Activated naive CD4-positive, alpha-beta T cell treated with anti-CD3 and anti-CD28 coated beads, Interleukin-2, amount 10 ng/mL, durations not matched to agents 7 days and 5 days (primary cell): ENCODE measurements at regions of chr9 and their contacts with region 1.

Region 1: DNA sequence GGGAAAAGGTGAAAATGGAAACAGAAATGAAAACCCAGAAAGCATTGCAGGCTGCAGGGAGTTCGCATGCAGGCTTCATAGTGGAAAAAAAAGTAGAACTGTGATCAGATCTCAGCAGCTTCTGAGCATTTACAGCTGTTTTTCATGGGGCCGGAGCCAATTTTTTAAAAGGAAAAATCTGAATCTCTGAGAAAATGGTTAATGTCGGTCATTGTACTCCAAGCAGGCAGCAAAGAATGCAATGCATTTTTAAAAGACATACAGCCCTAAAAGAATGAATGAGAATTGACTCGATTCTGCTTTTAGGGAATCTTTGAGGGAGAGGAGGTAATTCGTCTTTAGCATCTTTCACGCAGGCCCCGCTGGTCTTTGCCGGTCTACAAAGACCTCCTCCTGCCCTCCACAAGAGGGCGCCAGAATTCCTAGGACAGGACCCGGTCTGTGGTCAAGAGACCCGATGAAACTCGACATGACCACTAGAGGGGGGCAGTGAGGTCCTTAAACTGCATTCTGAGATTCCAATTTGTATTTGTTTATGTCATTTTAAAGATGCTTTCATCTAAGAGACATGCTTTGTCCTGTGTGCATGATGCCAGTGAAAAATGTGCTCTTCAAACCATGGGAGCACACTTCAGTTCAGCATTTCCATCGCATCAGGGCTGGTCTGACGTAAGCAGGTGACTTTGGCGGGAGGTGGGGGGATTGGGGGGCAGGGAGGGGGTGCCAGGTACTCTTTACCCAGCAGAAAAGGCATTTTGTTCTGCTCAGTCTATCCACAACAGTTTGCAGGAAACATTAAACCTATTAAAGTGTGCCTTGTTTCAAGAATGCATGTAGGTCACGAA is 43.7 kb upstream of the TMEM252 start:
- DNase-seq: peak; percentile 89
- H3K4me3 Mint-ChIP-seq: no peak overlapping the region
- H3K27ac Mint-ChIP-seq: no peak overlapping the region
- H3K4me1 Mint-ChIP-seq: peaks cover 3% of the 10 kb centered on the region
- H3K27me3 Mint-ChIP-seq: peaks cover 14% of the 10 kb centered on the region

Region 2: DNA sequence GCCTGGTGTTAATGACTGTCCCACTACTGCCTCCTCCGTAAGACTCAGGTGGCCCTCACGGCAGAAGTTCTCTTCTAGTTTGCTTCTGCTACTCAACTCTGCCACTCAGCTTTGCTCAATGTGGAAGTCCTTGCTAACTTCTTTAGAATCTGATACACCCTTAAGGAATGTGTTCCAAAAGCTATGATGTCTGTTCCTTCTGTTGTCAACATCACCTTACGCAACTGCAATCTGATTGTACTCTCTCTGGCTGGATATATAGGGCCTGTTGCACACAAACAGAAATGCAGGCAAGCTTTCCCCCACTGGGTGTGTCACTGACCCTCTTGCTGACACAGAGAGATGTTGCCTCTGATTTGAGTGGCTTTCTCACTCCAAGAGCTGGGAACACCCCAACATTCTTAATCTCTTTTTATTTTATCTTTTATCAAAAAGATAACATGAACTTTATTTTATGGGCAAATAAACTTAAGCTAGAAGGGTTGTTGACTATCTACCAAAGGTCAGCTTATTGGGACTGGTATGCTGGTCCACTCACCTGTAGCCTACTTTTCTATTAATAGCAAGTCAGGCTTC is 69.0 kb before region 1 on chr9:
- CTCF ChIA-PET with region 1: no interaction called
- DNase-seq: no peak
- H3K4me3 Mint-ChIP-seq: no peak overlapping the region
- H3K27ac Mint-ChIP-seq: no peak overlapping the region
- H3K4me1 Mint-ChIP-seq: no peaks in the 10 kb centered on the region
- H3K27me3 Mint-ChIP-seq: peaks cover 4% of the 10 kb centered on the region

Region 3: DNA sequence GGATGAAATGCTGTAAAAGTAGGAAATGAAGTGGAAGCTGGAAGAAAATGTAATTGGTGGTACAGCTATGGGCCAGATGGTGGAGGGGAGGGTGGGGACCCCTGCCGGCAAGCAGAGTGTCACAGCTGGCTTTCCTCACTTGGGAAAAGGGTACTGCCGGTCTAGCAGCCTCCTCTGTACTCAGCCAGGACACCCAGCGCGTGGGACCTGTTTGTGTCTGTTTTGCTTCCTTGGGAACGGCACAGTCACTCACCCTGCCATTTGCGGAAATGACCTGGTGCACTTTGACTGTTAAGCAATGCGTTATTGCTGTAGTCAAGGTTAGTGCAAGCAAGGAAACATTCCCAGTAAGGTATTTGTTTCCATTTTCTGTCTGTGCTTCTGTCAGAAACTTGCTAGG is 53.8 kb before region 1 on chr9:
- CTCF ChIA-PET with region 1: no interaction called
- DNase-seq: no peak
- H3K4me3 Mint-ChIP-seq: no peak overlapping the region
- H3K27ac Mint-ChIP-seq: no peak overlapping the region
- H3K4me1 Mint-ChIP-seq: no peaks in the 10 kb centered on the region
- H3K27me3 Mint-ChIP-seq: peaks cover 3% of the 10 kb centered on the region

Region 4: GRCh38 chr9:68546596-68547390 is 37.6 kb before region 1 on chr9:
- CTCF ChIA-PET with region 1: no interaction called
- DNase-seq: no peak
- H3K4me3 Mint-ChIP-seq: no peak overlapping the region
- H3K27ac Mint-ChIP-seq: peak overlapping the region; percentile 43
- H3K4me1 Mint-ChIP-seq: peaks cover 10% of the 10 kb centered on the region
- H3K27me3 Mint-ChIP-seq: peaks cover 14% of the 10 kb centered on the region

Region 5: DNA sequence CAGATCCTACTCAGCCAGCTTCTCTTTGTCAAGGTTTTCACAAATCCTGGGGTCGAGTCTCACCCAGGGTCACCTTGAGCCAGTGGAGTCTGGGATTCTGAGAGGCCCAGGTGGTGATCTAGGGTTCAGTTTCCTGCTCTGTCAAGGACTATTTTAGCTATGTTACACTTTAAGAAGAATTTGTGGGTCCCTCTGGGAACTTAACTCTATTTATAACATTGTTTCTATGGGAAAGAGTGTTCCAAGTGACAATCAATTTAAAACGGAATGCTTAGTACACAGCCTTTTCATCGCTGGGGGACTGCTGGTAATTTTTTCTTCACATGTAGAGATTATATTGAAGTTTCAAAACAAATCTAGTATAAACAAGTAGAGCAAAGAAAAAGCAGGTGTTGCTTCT is 16.8 kb before region 1 on chr9:
- CTCF ChIA-PET with region 1: interaction called, 11 read pairs
- DNase-seq: no peak
- H3K4me3 Mint-ChIP-seq: no peak overlapping the region
- H3K27ac Mint-ChIP-seq: no peak overlapping the region
- H3K4me1 Mint-ChIP-seq: no peaks in the 10 kb centered on the region
- H3K27me3 Mint-ChIP-seq: peaks cover 21% of the 10 kb centered on the region

Region 6: GRCh38 chr9:68949271-68950000 is 365.0 kb after region 1 on chr9:
- CTCF ChIA-PET with region 1: interaction called, 13 read pairs
- DNase-seq: peak; percentile 59
- H3K4me3 Mint-ChIP-seq: no peak overlapping the region
- H3K27ac Mint-ChIP-seq: no peak overlapping the region
- H3K4me1 Mint-ChIP-seq: peaks cover 17% of the 10 kb centered on the region
- H3K27me3 Mint-ChIP-seq: peaks cover 17% of the 10 kb centered on the region